Natural killer cell (primary cell): ENCODE measurements at regions of chr17 and their contacts with region 1.

Region 1: DNA sequence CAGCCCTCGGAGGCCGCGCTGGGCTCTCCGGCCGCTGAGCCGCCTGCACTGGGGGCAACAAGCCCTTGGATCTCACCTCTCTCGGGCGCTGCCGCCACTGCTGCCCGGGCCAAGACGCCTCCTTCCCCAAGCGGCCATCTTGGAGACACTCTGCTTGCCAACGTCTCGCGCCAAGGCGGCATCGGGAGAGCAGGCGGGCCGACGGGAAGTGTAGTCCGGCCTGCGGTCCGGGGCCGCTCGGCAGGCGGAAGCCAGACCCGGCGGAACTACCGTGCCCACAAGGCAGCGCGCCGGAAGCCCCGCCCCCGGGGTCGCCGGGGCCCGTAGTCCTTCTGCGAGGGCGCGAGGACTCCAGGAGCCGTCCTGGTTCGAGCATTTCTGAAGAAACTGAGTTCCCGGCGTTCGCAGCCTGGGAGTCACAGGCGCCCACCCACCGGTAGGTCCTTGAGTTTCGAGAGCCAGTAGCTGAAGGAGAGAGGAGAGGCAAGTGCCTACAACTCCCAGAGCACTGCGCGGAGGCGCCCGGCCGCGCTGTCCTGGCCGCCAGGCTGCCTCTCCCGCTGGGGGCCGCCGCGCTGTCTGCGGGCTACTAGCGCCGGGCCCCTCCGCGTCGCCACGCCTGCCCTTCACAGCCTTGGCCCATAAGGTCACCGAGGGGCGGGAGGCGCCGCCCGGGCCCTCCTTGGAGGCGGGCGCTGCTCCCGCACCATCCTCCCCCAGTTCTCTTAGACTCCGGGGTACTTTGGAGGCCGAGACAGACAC is at the start of gene TMEM11:
- DNase-seq: peak; percentile 96 to 97
- ATAC-seq: peak; percentile 88 to 97 (median 90)
- H3K4me3 ChIP-seq: peak within 1 kb of the TSS; percentile 99
- H3K4me3 Mint-ChIP-seq: peak within 1 kb of the TSS; percentile 96
- H3K27ac ChIP-seq: peak within 1 kb of the TSS; percentile 97
- H3K27ac Mint-ChIP-seq: peak within 1 kb of the TSS; percentile 92 to 95
- H3K4me1 ChIP-seq: peaks cover 35% of the 10 kb centered on the region
- H3K4me1 Mint-ChIP-seq: peaks cover 40 to 50% of the 10 kb centered on the region in 2 donors
- H3K27me3 ChIP-seq: no peaks in the 10 kb centered on the region
- H3K27me3 Mint-ChIP-seq: no peaks in the 10 kb centered on the region
- CTCF ChIP-seq: peak; percentile 3
- total RNA-seq, gene TMEM11: 18.4 to 27.0 (median 18.6) TPM

Region 2: DNA sequence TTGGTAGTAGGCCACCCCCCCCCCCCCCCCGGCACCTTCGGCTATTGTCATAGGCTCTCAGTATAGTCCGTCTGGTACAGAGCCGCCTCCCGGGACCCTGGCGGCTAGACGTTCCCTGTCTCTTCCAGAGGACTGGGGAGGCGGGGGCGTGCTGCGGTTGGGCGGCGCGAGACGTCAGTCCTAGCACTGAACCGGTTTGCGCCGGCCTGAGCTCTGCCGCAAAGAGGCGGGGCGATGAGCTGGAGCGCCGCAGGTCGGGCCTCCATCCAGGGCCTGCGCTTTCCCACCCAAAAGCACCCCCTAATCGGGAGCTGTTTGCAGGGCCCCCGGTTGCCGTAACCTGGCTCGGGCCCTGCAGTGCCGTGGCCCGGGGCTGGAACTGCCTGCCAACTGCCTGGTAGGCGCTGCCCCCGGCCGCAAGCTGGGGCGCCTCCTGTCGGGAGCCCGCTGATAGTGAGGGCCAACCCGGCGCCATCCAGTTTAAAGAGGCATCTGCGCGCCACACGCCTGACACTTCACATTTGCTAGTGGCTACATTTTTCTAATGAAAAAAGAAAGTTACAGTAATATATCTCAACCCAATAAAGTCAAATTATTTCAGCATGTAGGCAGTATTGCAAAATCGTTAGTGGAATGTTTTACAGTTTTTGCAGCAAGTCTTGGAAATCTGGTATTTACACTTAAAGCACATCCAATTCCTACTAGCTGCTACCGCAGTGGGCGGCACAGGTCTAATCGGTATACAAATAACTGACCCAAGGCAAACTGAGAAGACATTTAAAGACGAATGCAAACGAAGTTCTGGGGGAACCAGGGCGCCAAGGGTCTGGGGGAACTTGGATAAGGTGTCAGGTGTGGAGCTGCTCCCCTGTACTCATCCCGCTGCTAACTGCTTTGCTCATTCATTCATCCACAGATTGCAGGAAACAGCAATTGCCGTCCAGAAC is 170.6 kb before region 1 on chr17:
- intact Hi-C with region 1: loop called (anchors 2 kb)
- DNase-seq: peak in 1 of 2 donors; percentile 94
- ATAC-seq: peak; percentile 70 to 90 (median 80)
- H3K4me3 ChIP-seq: peak overlapping the region; percentile 90
- H3K4me3 Mint-ChIP-seq: peak overlapping the region; percentile 88
- H3K27ac ChIP-seq: peak overlapping the region; percentile 100
- H3K27ac Mint-ChIP-seq: peak overlapping the region; percentile 91 to 93
- H3K4me1 ChIP-seq: peaks cover 30% of the 10 kb centered on the region
- H3K4me1 Mint-ChIP-seq: peaks cover 16 to 27% of the 10 kb centered on the region in 2 donors
- H3K27me3 ChIP-seq: no peaks in the 10 kb centered on the region
- H3K27me3 Mint-ChIP-seq: peaks cover 4 to 5% of the 10 kb centered on the region in 2 donors
- CTCF ChIP-seq: peak; percentile 89

Region 3: GRCh38 chr17:21126645-21127510 is 87.3 kb before region 1 on chr17 and contains the start of gene DHRS7B:
- intact Hi-C with region 1: loop called (anchors 2 kb)
- DNase-seq: peak; percentile 95 to 99
- ATAC-seq: peak; percentile 84 to 91 (median 88)
- H3K4me3 ChIP-seq: peak within 1 kb of the TSS; percentile 72
- H3K4me3 Mint-ChIP-seq: peak within 1 kb of the TSS; percentile 98
- H3K27ac ChIP-seq: peak within 1 kb of the TSS; percentile 91
- H3K27ac Mint-ChIP-seq: peak within 1 kb of the TSS; percentile 97 to 98
- H3K4me1 ChIP-seq: peaks cover 16% of the 10 kb centered on the region
- H3K4me1 Mint-ChIP-seq: peaks cover 34 to 39% of the 10 kb centered on the region in 2 donors
- H3K27me3 ChIP-seq: no peaks in the 10 kb centered on the region
- H3K27me3 Mint-ChIP-seq: no peaks in the 10 kb centered on the region
- CTCF ChIP-seq: no peak
- total RNA-seq, gene DHRS7B: 10.3 to 13.4 (median 11.5) TPM

Region 4: DNA sequence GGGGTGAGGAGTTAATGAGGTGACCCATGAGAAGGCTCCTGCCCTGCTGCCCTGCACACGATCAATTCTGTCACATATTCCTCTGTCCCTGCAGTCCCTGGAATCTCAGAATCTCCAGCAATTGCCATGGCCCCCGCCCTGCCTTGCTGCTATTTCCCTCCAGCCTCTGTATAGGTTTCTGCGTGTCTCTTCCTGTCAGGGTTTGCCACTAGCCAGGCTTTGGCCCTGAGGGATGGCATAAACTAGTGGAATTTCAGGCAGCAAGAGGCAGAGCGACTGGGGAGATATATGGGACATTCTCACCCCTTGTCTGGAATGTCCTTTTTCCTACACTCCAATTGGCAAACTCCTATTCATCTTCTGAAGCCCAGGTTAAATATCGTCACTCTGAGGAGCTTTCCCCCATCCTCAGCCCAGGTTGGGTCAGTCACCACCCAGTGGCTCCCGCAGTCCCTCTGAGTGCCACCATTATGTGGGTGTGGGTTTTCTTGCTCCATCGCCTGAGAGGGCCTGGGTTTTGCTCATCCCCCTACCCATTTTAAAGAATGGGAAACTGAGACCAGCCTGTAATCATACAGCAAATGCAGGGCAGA is 54.5 kb after region 1 on chr17:
- intact Hi-C with region 1: loop called (anchors 5 kb)
- DNase-seq: no peak
- ATAC-seq: peak in 2 of 3 donors; percentile 6 to 16
- H3K4me3 ChIP-seq: no peak overlapping the region
- H3K4me3 Mint-ChIP-seq: peak overlapping the region; percentile 35
- H3K27ac ChIP-seq: peak overlapping the region; percentile 76
- H3K27ac Mint-ChIP-seq: peak overlapping the region; percentile 85 to 96
- H3K4me1 ChIP-seq: peaks cover 27% of the 10 kb centered on the region
- H3K4me1 Mint-ChIP-seq: peaks cover 18 to 32% of the 10 kb centered on the region in 2 donors
- H3K27me3 ChIP-seq: no peaks in the 10 kb centered on the region
- H3K27me3 Mint-ChIP-seq: no peaks in the 10 kb centered on the region
- CTCF ChIP-seq: no peak

Region 5: GRCh38 chr17:21511363-21512198 is 297.4 kb after region 1 on chr17:
- intact Hi-C with region 1: loop called (anchors 2 kb)
- DNase-seq: peak; percentile 60 to 81
- ATAC-seq: peak; percentile 79 to 81 (median 80)
- H3K4me3 ChIP-seq: peak overlapping the region; percentile 42
- H3K4me3 Mint-ChIP-seq: peak overlapping the region; percentile 82
- H3K27ac ChIP-seq: no peak overlapping the region
- H3K27ac Mint-ChIP-seq: peak overlapping the region in 1 of 2 donors; percentile 44
- H3K4me1 ChIP-seq: peaks cover 16% of the 10 kb centered on the region
- H3K4me1 Mint-ChIP-seq: peaks cover 11 to 17% of the 10 kb centered on the region in 2 donors
- H3K27me3 ChIP-seq: peaks cover 23% of the 10 kb centered on the region
- H3K27me3 Mint-ChIP-seq: peaks cover 31 to 52% of the 10 kb centered on the region in 2 donors
- CTCF ChIP-seq: peak; percentile 80